ENCODE measurements at regions of chr12 and their contacts with region 1.

Region 1: DNA sequence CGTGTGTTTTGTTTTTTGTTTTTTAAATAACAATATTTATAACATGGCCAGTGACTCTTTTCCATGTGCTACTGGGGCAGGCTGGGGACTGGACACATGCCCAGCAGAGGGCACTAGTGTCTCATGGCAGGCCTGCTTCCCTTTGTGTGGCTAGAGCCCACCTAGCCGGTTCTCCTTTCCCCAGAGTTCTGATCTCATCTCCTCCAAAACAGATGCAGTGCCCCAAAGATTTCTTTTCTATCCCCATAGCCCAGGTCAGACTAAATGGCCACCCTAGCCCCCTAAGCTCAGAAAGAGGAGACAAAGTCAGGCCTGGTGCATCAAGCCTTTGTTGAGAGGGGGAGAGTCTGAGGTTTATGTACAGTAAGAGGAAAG is 21.2 kb downstream of the PRPF40B start:
- DNase-seq: peak; percentile 80 to 88
- ATAC-seq: peak; percentile 71 to 87 (median 82)
- H3K4me3 ChIP-seq: no peak overlapping the region
- H3K27ac ChIP-seq: peak overlapping the region in 6 of 10 donors; percentile 35 to 90 (median 46)
- H3K4me1 ChIP-seq: peaks cover 16 to 59% (median 50%) of the 10 kb centered on the region in 9 donors
- H3K27me3 ChIP-seq: no peaks in the 10 kb centered on the region
- CTCF ChIP-seq: peak in 8 of 9 donors; percentile 92 to 98 (median 96)

Region 2: DNA sequence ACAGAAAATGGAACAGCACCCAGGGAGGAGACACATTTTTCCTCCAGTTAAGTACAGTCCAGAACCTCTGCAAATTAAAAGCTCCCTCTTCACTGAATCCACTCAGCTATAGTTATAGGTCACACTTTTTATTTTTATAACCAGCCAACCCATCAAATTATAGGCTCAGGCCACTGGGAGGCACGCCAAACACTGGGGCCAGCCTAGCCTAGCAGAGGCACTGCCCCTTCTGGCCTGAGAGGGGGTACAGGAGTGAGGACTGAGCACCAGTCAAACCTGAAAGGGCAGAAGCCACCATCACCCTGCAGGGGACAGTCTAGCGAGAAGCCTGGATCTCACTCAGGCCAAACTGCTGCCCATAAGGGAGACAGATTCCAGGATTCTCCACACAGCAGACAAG is 43.3 kb after region 1 on chr12:
- intact Hi-C with region 1: no loop called
- DNase-seq: no peak
- ATAC-seq: peak in 1 of 8 donors; percentile 29
- H3K4me3 ChIP-seq: no peak overlapping the region
- H3K27ac ChIP-seq: no peak overlapping the region
- H3K4me1 ChIP-seq: peaks cover 0 to 88% (median 40%) of the 10 kb centered on the region in 9 donors
- H3K27me3 ChIP-seq: no peaks in the 10 kb centered on the region
- CTCF ChIP-seq: no peak

Region 3: GRCh38 chr12:49828133-49829091 is 183.8 kb after region 1 on chr12 and contains the start of gene NCKAP5L:
- intact Hi-C with region 1: loop called in 3 of 10 experiments (anchors 10 kb)
- DNase-seq: peak; percentile 97 to 98
- ATAC-seq: peak; percentile 96 to 98 (median 97)
- H3K4me3 ChIP-seq: peak within 1 kb of the TSS; percentile 78 to 92 (median 89)
- H3K27ac ChIP-seq: peak within 1 kb of the TSS; percentile 83 to 97 (median 93)
- H3K4me1 ChIP-seq: peaks cover 17 to 53% (median 47%) of the 10 kb centered on the region in 9 donors
- H3K27me3 ChIP-seq: no peaks in the 10 kb centered on the region
- CTCF ChIP-seq: no peak
- total RNA-seq, gene NCKAP5L: 17.3 to 32.1 (median 23.7) TPM

Measured in heart right ventricle (tissue), 16 donors.